ENCODE measurements at regions of chr5 and their contacts with region 1.

Region 1: GRCh38 chr5:181052672-181053487 is 12.8 kb downstream of the BTNL9 start:
- DNase-seq: peak in 1 of 2 experiments; percentile 70
- H3K4me3 ChIP-seq: peak overlapping the region; percentile 57 to 85 (median 68)
- H3K27ac ChIP-seq: no peak overlapping the region
- H3K4me1 ChIP-seq: peaks cover 3 to 16% (median 9%) of the 10 kb centered on the region in 4 experiments; a peak in 6 of 7 replicates
- H3K27me3 ChIP-seq: peaks cover 44 to 83% (median 68%) of the 10 kb centered on the region in 4 experiments
- CTCF ChIP-seq: no peak
- EP300 ChIP-seq: no peak
- POLR2A ChIP-seq: no peak
- RAD21 ChIP-seq: no peak

Region 2: GRCh38 chr5:181069767-181070491 is 17.0 kb after region 1 on chr5:
- CTCF ChIA-PET with region 1: interaction called, 13 read pairs
- POLR2A ChIA-PET with region 1: interaction called, 3 read pairs
- DNase-seq: peak in 1 of 2 experiments; percentile 85
- H3K4me3 ChIP-seq: peak overlapping the region in 3 of 4 experiments; percentile 14 to 49 (median 23); a peak in 6 of 8 replicates
- H3K27ac ChIP-seq: no peak overlapping the region
- H3K4me1 ChIP-seq: peaks cover 0 to 5% (median 3%) of the 10 kb centered on the region in 4 experiments; a peak in 3 of 7 replicates
- H3K27me3 ChIP-seq: no peaks in the 10 kb centered on the region; a peak in 2 of 7 replicates
- CTCF ChIP-seq: no peak
- EP300 ChIP-seq: no peak
- POLR2A ChIP-seq: peak; percentile 50 to 85
- RAD21 ChIP-seq: no peak

Region 3: DNA sequence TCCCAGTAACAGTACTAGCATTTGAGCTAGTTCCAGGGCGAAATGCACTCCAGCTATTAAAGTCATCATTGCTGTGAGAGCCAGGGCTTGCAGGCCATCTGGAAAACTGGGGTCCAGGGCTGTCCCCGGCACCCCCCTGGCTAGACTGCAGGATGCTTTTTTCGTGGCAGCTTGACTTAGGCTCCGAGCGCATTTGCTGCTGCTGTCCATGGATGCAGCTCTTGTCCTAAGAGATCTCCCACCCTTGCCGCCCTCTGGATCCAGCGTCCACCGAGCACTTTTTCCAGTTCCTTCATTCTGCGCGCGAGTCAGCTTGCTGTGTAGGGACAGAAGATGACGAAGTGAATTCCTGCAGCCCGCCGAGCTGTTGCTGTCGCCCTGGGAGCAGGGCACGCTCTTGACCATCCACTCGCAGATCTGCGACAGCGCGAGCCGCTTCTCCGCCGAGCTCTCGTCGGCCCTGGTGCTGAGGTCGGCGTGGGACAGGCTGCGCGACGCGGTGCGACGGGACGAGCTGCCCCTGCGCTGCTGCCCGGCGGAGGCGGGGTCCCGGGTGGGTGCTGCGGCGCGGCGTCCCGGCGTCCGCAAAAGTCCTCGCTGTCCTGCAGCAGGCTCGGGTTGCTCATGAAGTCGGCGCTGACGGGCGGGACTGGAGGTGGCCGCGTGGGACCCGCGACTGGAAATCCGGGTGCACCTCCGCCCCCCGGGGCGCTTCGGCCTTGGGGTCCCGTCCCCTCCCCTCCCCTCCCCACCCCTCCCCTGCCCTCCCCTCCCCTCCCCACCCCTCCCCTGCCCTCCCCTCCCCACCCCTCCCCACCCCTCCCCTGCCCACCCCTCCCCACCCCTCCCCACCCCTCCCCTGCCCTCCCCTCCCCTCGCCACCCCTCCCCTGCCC is 47.5 kb after region 1 on chr5:
- CTCF ChIA-PET with region 1: no interaction called
- POLR2A ChIA-PET with region 1: no interaction called
- DNase-seq: peak in 1 of 2 experiments; percentile 59
- H3K4me3 ChIP-seq: peak overlapping the region in 3 of 4 experiments; percentile 3 to 56 (median 32); a peak in 7 of 8 replicates
- H3K27ac ChIP-seq: no peak overlapping the region
- H3K4me1 ChIP-seq: peaks cover 0 to 7% (median 0%) of the 10 kb centered on the region in 4 experiments; a peak in 2 of 7 replicates
- H3K27me3 ChIP-seq: peaks cover 18 to 32% (median 27%) of the 10 kb centered on the region in 4 experiments
- CTCF ChIP-seq: no peak
- EP300 ChIP-seq: no peak
- POLR2A ChIP-seq: no peak
- RAD21 ChIP-seq: no peak